ENCODE measurements at regions of chr14 and their contacts with region 1.

Region 1: GRCh38 chr14:54396493-54397335 is at the start of gene CDKN3:
- DNase-seq: peak; percentile 99
- H3K4me3 ChIP-seq: peak within 1 kb of the TSS; percentile 96
- H3K27ac ChIP-seq: peak within 1 kb of the TSS; percentile 66
- H3K4me1 ChIP-seq: peaks cover 31% of the 10 kb centered on the region
- CTCF ChIP-seq: peak; percentile 58
- total RNA-seq, gene CDKN3: 134 and 150 TPM in 2 replicates

Region 2: DNA sequence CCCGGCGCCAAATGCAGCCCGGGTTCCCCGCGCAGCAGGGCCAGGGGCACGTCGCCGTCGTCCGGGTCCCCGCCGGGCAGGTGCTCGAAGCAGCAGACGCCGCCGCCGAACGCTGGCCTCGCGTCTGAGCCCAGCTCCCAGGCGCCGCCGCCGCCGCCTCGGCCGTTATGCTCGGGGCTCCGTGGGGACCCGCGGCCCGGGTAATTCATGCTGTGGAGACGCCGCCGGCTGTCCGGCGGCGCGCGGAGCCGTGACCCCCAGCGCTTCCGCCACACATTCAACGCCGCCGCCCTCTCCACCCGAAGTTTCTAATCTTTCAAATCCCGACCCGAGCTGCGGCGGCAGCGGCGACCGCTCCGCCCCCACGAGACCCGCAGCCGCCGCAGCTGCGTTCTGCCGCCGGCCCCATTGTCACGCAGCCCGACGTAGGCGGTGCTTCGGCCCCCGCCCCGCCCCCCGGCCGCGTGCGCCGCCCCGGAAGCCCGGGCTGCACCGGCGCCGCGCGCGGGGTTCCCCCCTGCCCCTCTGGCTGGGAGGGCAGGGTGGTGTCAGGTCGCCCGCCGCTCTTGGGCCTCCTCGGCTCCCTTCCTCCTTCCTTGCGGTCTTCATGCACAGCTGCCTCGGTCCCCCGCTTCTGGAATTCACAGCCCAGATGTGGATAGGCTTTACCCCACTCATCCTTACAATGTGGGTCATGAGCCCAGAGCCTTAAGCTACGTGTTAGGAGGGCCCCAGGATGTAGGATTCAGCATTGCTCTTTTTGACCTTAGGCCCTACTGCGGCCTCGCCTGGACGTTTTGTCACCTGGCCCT is 1243.6 kb before region 1 on chr14 and contains the start of gene DDHD1:
- CTCF ChIA-PET with region 1: no interaction called
- POLR2A ChIA-PET with region 1: no interaction called
- intact Hi-C with region 1: loop called (anchors 5 kb)
- DNase-seq: peak; percentile 89
- H3K4me3 ChIP-seq: peak within 1 kb of the TSS; percentile 85
- H3K27ac ChIP-seq: peak within 1 kb of the TSS; percentile 81
- H3K4me1 ChIP-seq: peaks cover 31% of the 10 kb centered on the region
- CTCF ChIP-seq: no peak
- total RNA-seq, gene DDHD1: 26.7 and 28.7 TPM in 2 replicates

Region 3: GRCh38 chr14:53613404-53614253 is 783.1 kb before region 1 on chr14:
- CTCF ChIA-PET with region 1: no interaction called
- POLR2A ChIA-PET with region 1: interaction called, 4 read pairs
- intact Hi-C with region 1: loop called (anchors 10 kb)
- DNase-seq: peak; percentile 96
- H3K4me3 ChIP-seq: peak overlapping the region; percentile 69
- H3K27ac ChIP-seq: peak overlapping the region; percentile 95
- H3K4me1 ChIP-seq: peaks cover 64% of the 10 kb centered on the region
- CTCF ChIP-seq: peak; percentile 44; the same call in 1 of the 2 replicates

Region 4: DNA sequence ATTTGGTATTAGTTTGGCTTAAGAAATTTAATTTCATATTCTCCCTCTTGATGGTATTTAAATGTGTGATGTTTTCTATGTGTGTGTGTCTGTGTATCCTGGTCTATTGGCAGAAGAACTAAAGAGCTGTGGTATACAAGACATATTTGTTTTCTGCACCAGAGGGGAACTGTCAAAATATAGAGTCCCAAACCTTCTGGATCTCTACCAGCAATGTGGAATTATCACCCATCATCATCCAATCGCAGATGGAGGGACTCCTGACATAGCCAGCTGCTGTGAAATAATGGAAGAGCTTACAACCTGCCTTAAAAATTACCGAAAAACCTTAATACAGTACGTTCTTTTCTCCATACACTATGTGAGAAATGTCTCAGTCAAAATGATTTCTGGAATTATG is 14.7 kb after region 1 on chr14:
- CTCF ChIA-PET with region 1: no interaction called
- POLR2A ChIA-PET with region 1: interaction called, 10 read pairs
- intact Hi-C with region 1: no loop called
- DNase-seq: no peak
- H3K4me3 ChIP-seq: no peak overlapping the region
- H3K27ac ChIP-seq: no peak overlapping the region
- H3K4me1 ChIP-seq: no peaks in the 10 kb centered on the region
- CTCF ChIP-seq: no peak

Region 5: DNA sequence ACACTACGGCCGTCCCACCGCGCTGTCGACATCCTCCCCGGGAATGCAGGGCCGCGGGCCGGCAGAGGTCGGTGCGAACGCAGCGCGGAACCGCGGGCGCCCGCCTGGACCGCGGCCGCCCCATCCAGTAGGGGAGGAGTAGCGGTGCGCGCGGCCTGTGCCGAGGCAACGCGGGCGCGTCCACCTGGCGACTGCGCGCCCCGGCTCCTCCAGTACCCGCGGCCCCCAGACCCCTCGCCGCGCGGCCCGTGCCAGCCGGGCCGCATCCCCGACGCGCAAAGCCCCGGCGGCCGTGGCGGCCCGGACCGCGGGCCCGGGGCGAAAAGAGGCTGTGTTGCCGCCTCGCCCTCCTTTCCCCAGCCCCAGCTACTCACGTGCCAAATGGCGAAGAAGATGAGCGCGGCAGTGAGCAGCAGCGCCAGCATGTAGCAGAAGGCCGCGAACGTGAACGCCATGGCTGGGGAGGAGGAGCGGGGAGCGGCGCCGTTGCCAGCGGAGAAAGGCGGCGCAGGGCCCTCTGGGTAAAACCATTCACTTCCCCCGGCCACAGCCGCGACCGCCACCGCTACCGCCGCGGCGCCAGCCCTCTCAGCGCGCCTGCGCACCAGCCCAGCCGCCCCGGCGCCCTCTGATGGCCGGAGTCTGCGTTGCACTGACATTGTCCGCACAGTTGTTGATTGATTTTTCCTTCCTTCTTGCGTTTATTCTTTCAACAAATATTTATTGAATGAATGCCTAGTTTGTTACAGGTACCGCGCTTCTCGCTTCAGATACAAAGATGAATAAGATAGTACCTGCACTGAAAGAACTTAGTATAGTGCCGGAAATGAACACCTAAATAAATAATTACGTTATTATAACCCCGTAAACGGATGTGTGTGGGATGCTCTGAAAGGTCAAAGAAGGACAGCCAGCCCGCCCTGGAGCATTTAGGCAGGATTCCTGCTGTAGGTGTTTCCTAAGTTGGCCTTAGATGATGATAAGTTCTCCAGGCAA is 44.5 kb after region 1 on chr14 and contains the start of gene CNIH1:
- CTCF ChIA-PET with region 1: no interaction called
- POLR2A ChIA-PET with region 1: interaction called, 7 read pairs
- intact Hi-C with region 1: loop called (anchors 2 kb)
- DNase-seq: peak; percentile 94
- H3K4me3 ChIP-seq: peak within 1 kb of the TSS; percentile 86
- H3K27ac ChIP-seq: peak within 1 kb of the TSS; percentile 77
- H3K4me1 ChIP-seq: peaks cover 47% of the 10 kb centered on the region
- CTCF ChIP-seq: peak; percentile 94
- total RNA-seq, gene CNIH1: 18.7 and 29.7 TPM in 2 replicates

Region 6: GRCh38 chr14:54483073-54483745 is 86.5 kb after region 1 on chr14:
- CTCF ChIA-PET with region 1: interaction called, 3 read pairs
- POLR2A ChIA-PET with region 1: interaction called, 11 read pairs
- intact Hi-C with region 1: loop called (anchors 2 kb)
- DNase-seq: peak; percentile 71
- H3K4me3 ChIP-seq: peak overlapping the region; percentile 87
- H3K27ac ChIP-seq: peak overlapping the region; percentile 93
- H3K4me1 ChIP-seq: peaks cover 71% of the 10 kb centered on the region
- CTCF ChIP-seq: no peak

Region 7: DNA sequence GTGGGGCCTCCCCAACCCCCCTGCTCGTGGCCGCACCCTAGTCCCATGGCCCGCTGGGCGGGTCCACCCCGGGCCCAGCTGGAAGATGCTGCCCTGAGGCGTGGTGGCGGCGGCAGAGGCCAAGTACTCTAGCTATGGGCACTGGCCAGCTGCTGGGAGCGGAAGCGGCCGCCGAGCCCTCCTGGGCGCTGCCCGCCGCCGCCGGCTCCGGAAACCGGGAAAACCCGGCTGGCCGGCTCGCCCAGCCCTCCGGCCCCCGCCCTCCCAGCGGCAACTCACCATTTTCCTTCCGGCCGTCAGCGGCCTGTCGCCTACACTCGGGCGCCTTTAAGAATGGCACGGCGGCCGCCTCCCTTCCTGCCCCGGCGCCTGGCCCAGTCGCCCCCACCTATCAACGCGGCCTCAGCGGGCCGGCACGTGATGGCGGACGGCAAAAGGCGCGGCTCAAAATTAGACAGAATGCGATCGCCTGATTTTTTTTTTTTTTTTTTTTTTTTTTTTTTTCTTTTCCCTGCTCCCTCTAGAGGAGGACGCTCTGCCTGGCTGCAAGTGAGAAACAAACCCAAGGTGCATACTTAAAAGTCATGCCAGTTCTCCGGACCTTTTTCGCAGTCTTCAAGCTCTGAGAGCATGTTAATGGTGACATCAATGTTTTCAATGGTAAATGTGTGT is 92.1 kb after region 1 on chr14 and contains the start of gene GMFB:
- CTCF ChIA-PET with region 1: interaction called, 3 read pairs
- POLR2A ChIA-PET with region 1: interaction called, 11 read pairs
- intact Hi-C with region 1: loop called (anchors 2 kb)
- DNase-seq: peak; percentile 93
- H3K4me3 ChIP-seq: peak within 1 kb of the TSS; percentile 87
- H3K27ac ChIP-seq: peak within 1 kb of the TSS; percentile 65
- H3K4me1 ChIP-seq: peaks cover 52% of the 10 kb centered on the region
- CTCF ChIP-seq: peak; percentile 62
- total RNA-seq, gene GMFB: 45.7 and 61.3 TPM in 2 replicates